Panc1 (cell line): ENCODE measurements at regions of chr2 and their contacts with region 1.

Region 1: DNA sequence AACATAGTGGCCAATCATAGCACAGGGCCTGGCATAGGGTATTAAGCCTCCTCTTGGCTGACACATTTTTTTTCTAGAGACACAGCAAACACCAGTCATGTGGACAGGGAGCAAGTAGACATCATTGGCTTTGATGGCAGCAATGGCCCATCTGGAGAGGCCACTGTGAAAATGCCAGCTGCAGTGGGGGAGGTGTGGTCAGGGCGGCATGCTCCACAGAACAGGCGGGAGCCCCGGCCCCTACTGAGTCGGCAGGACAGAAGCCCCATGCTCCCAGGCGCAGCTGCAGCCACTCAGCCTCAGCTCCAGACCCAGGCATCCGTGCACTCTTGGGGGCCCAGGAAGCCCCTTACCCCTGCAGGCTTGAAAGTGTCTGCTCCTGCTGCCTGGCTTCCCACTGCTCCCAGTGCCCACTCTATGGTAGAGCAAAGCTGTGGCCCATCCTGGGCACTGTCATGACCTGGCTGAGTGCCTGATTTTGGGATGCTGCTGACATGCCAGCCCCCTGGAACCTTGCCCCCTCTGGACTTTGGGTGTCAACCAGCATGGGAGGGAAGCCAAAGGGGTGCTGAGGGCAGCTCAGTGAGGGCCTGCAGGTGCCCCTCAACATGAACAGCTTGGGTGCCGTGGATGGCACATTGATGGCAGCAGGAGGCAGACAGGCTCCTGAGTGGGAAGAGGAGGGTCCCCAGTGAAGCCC is 23.3 kb upstream of the UBE2F start:
- DNase-seq: no peak
- ATAC-seq: no peak
- H3K4me3 ChIP-seq: no peak overlapping the region
- H3K27ac ChIP-seq: no peak overlapping the region
- H3K4me1 ChIP-seq: no peaks in the 10 kb centered on the region
- H3K27me3 ChIP-seq: no peaks in the 10 kb centered on the region
- CTCF ChIP-seq: no peak

Region 2: DNA sequence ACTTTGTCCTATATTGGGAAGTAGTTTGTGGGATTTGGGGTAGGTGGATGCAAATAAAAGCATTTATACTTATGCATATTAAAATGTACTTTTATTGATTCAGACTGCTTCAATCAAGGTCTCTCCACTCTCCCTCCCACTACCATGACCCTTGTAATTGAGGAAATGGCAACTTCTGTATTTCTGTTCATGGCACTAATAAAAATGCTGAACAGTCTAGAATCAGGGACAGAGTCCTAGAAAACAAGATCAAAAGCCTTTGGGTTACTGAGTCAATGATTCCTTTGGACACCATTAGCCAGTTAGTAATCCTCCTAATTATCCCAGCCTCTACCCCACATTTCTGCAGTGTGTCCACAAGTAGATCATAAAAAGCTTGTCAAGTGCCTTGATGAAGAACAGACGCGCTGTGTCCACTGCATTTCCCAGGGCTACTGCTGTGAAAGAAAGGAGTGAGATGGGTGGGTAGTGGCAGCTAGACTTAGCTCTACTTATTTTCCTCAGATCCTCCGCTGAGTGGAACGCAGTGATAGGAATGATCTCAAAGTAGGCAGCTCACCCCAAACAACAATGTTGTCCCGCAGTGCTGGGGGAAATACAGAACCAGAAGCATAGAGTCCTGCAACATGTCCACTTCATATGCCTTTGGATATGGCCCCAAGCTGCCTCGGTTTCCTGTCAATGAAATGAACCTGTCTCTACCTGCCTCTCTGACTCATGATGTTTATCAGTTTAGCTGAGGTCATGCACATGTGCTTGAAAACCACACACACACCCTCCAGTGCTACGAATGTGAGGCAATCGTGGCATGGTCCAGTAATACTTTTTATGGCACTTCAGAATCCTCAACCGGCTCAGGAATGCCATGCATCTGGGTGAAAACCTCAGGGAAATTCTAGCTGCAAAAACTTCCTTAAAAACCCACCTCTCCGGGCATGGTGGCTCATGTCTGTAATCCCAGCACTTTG is 645.1 kb before region 1 on chr2:
- CTCF ChIA-PET with region 1: no interaction called
- POLR2A ChIA-PET with region 1: no interaction called
- in situ Hi-C with region 1: no loop called
- intact Hi-C with region 1: no loop called
- DNase-seq: no peak
- ATAC-seq: no peak
- H3K4me3 ChIP-seq: no peak overlapping the region
- H3K27ac ChIP-seq: peak overlapping the region; percentile 59
- H3K4me1 ChIP-seq: peaks cover 6% of the 10 kb centered on the region; the same call in 1 of the 2 replicates
- H3K27me3 ChIP-seq: no peaks in the 10 kb centered on the region
- CTCF ChIP-seq: no peak

Region 3: DNA sequence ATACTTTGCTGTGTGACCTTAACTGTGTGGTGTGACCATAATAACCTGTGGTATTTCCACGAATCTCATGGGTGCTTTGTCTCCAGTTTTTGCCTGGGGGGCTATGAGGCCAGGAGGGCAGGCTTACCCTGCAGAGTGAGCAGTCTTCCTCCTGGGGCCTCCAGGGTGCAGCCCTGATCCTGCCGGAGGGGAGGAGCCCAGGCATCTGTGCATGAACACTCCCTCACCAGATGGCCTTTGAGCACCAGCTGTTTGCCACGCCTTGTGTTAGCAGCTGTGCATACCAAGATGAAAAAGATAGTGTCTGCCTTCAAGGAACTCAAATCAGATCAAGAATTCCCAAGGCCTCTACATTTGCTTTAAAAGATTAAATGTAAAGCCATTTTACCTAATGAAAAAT is 219.9 kb before region 1 on chr2:
- CTCF ChIA-PET with region 1: interaction called, 10 read pairs
- POLR2A ChIA-PET with region 1: no interaction called
- in situ Hi-C with region 1: no loop called
- intact Hi-C with region 1: no loop called
- DNase-seq: no peak
- ATAC-seq: peak; percentile 80
- H3K4me3 ChIP-seq: no peak overlapping the region
- H3K27ac ChIP-seq: 0 out of 2 replicates have a peak overlapping the region, but pooled peaks have one; percentile 18
- H3K4me1 ChIP-seq: peaks cover 32% of the 10 kb centered on the region
- H3K27me3 ChIP-seq: no peaks in the 10 kb centered on the region
- CTCF ChIP-seq: no peak

Region 4: DNA sequence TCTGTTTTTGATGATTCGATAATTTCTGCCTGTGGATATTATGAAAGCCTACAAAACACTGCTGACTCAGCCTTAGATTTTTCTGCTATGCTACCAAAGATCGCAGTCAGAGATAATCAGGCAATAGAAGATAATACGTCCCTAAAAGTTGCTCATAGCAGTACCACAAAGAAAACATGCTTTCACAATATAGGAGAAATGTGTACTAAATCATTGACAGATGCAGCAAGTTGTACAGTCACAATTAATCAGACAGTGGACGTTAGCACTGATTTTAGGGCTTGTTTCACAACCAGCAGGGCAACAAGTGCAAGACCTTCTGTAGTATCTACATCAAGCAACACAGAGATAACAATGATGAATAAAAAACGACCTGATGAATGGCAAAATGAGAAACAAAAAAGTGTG is 125.5 kb before region 1 on chr2:
- CTCF ChIA-PET with region 1: no interaction called
- POLR2A ChIA-PET with region 1: no interaction called
- in situ Hi-C with region 1: no loop called
- intact Hi-C with region 1: no loop called
- DNase-seq: no peak
- ATAC-seq: no peak
- H3K4me3 ChIP-seq: no peak overlapping the region
- H3K27ac ChIP-seq: no peak overlapping the region
- H3K4me1 ChIP-seq: no peaks in the 10 kb centered on the region
- H3K27me3 ChIP-seq: peaks cover 4% of the 10 kb centered on the region; the same call in 1 of the 2 replicates
- CTCF ChIP-seq: no peak

Region 5: DNA sequence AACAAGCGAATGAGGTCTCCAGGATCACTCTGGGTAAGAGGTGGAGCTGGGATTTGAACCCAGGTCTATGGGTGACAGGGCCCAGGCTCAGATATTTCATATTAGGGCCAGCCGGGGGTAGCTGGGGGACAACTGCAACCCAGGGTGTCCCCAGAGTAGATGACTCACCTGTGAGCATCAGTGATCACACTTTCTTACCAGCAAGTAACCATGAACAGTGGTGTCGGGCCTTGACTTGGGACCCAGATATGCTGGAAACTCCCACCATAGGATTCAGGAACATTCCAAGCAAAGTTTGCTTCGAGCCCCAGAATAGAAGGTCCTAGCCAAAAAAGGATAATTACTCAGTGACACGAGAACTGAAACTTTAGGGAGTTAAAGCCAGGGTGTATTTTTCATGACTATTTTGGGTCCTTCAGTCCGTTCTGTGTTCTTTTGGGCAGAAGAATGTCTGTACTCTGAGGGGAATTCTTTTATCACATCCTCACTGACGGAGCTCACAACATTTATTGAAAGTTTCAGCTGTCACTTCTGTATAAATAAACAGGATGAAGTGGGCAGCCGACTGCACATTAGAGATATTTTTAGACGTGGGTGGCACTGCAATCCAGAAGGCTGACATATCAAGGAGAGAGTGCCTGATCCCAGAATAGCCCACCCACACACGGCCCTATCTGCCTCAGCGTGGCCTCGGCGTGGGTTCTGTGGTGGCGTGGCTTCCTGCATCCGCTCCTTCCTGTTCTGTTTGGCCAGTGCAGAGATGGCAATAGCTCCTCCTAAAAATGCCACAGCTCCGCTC is 38.5 kb before region 1 on chr2:
- CTCF ChIA-PET with region 1: no interaction called
- POLR2A ChIA-PET with region 1: no interaction called
- in situ Hi-C with region 1: no loop called
- intact Hi-C with region 1: no loop called
- DNase-seq: no peak
- ATAC-seq: no peak
- H3K4me3 ChIP-seq: no peak overlapping the region
- H3K27ac ChIP-seq: no peak overlapping the region
- H3K4me1 ChIP-seq: no peaks in the 10 kb centered on the region
- H3K27me3 ChIP-seq: no peaks in the 10 kb centered on the region
- CTCF ChIP-seq: no peak

Region 6: GRCh38 chr2:237955640-237956401 is 12.3 kb after region 1 on chr2:
- CTCF ChIA-PET with region 1: no interaction called
- POLR2A ChIA-PET with region 1: interaction called, 11 read pairs
- in situ Hi-C with region 1: no loop called
- intact Hi-C with region 1: no loop called
- DNase-seq: no peak
- ATAC-seq: 0 out of 2 replicates have a peak, but pooled peaks have one; percentile 57
- H3K4me3 ChIP-seq: no peak overlapping the region
- H3K27ac ChIP-seq: no peak overlapping the region
- H3K4me1 ChIP-seq: no peaks in the 10 kb centered on the region
- H3K27me3 ChIP-seq: no peaks in the 10 kb centered on the region
- CTCF ChIP-seq: no peak